GM18951 (cell line): ENCODE measurements at regions of chr3 and their contacts with region 1.

Region 1: GRCh38 chr3:133384331-133385027 is 15.4 kb upstream of the BFSP2 start:
- POLR2A ChIP-seq: no peak

Region 2: GRCh38 chr3:133040696-133041523 is 343.6 kb before region 1 on chr3:
- in situ Hi-C with region 1: loop called (anchors 10 kb)
- POLR2A ChIP-seq: no peak